Activated T-helper 2 cell treated with anti-CD3 and anti-CD28 coated beads, Interferon-gamma antibody, Interleukin-2, Interleukin-4, amounts not matched to agents 10 μg/mL and 5 μg/mL and 100 μg/mL, durations not matched to agents 14 hours and 24 hours and 36 hours (primary cell): ENCODE measurements at regions of chr12 and their contacts with region 1.

Region 1: DNA sequence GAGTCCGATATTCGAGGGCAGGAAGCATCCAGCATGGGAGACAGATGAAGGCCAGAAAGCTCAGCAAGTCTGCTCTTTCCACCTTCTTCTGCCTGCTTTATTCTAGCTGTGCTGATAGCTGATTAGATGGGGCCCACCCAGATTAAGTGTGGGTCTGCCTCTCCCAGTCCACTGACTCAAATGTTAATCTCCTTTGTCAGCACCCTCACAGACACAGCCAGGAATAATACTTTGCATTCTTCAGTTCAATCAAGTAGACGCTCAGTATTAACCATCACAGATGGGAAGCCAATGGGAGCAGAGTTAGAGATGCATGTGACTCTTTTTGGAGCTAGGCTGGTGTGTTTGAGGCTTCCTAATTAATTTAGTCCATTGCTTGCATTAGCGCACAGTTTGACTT is 17.0 kb downstream of the C12orf75 start:
- DNase-seq: no peak
- H3K4me3 Mint-ChIP-seq: no peak overlapping the region
- H3K27ac Mint-ChIP-seq: peak overlapping the region; percentile 26
- H3K4me1 Mint-ChIP-seq: peaks cover 55% of the 10 kb centered on the region
- H3K27me3 Mint-ChIP-seq: no peaks in the 10 kb centered on the region

Region 2: GRCh38 chr12:104779134-104779533 is 568.4 kb before region 1 on chr12:
- intact Hi-C with region 1: no loop called
- DNase-seq: no peak
- H3K4me3 Mint-ChIP-seq: no peak overlapping the region
- H3K27ac Mint-ChIP-seq: no peak overlapping the region
- H3K4me1 Mint-ChIP-seq: peaks cover 3% of the 10 kb centered on the region
- H3K27me3 Mint-ChIP-seq: peaks cover 19% of the 10 kb centered on the region

Region 3: DNA sequence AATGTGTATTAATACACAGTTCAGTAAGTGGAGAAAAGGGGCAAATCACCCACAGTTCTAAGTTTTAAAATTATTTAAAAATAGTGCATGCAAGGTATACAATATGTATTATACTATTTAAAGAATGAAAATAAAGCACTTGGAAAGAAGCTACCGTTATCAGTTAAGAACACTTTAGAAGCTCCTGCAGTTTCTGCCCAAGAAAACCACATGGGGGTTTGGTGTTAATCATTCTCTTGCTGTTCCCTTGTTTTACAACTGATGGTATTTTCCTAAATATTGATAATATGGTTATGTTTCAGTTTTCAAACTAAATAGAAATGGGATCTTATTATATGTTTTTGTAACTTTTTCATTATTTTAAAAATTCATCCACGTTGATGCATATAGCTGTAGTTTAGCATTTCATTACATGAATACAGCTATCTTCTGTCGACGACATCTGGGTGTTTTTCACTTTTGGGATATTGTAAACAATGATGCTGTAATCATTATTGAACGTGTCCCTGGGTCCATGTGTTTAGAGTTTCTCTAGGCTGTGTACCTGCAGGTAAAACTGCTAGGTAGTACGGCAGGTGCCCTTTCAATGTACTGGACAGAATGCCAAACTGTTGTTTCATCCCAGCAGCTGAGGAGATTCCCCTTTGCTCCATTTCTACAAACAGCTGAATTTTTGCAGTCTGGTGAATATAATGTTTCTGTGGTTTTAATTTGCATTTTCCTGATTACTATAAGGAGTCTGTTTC is 175.6 kb before region 1 on chr12:
- intact Hi-C with region 1: no loop called
- DNase-seq: no peak
- H3K4me3 Mint-ChIP-seq: no peak overlapping the region
- H3K27ac Mint-ChIP-seq: no peak overlapping the region
- H3K4me1 Mint-ChIP-seq: peaks cover 25% of the 10 kb centered on the region
- H3K27me3 Mint-ChIP-seq: no peaks in the 10 kb centered on the region

Region 4: GRCh38 chr12:105337391-105337790 is 10.1 kb before region 1 on chr12:
- intact Hi-C with region 1: loop called (anchors 1 kb)
- DNase-seq: no peak
- H3K4me3 Mint-ChIP-seq: peak overlapping the region; percentile 26
- H3K27ac Mint-ChIP-seq: peak overlapping the region; percentile 98
- H3K4me1 Mint-ChIP-seq: peaks cover 67% of the 10 kb centered on the region
- H3K27me3 Mint-ChIP-seq: no peaks in the 10 kb centered on the region

Region 5: DNA sequence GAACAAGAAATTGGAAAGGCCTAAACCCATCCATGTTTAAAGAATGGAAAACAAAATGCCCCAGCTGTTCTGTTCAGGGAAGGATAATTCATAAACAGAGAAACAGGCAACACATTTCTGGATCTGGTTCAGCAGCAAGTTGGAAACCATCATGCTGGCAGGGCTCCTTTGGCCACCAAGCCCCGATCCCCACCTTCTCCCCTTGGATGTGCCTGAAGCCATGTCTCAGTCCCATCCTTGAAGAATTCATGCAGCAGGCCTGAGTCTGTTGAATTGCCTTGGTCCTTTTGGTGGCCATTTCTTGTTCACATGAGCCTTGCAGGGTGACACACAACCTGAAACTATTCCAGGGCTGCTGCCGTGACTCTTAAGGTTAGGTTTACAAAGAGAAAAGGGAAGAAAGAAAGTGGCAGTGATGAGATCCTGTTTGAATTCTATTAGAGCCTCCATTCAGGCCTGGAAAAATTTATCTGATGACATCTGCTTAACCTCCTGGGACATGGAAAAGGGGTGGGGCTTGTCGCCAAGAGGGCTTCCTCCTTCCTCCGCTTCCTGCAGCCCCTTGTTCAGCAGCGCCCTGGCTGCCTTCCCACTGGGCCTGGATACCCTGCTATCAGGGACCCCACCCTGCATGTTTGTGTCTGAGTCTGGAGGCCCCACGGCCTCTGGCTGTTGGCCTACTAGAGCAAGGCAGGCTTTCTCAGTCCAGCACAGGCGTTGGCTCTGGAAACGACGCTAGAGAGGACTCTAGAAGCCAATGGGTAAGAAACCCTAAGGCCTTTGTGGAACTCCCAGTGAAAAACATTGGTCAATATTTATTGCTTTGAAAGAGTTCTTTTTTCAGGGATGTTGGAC is 324.8 kb after region 1 on chr12:
- intact Hi-C with region 1: no loop called
- DNase-seq: no peak
- H3K4me3 Mint-ChIP-seq: no peak overlapping the region
- H3K27ac Mint-ChIP-seq: no peak overlapping the region
- H3K4me1 Mint-ChIP-seq: no peaks in the 10 kb centered on the region
- H3K27me3 Mint-ChIP-seq: no peaks in the 10 kb centered on the region

Region 6: GRCh38 chr12:106126441-106127337 is 779.2 kb after region 1 on chr12:
- intact Hi-C with region 1: no loop called
- DNase-seq: no peak
- H3K4me3 Mint-ChIP-seq: no peak overlapping the region
- H3K27ac Mint-ChIP-seq: no peak overlapping the region
- H3K4me1 Mint-ChIP-seq: no peaks in the 10 kb centered on the region
- H3K27me3 Mint-ChIP-seq: peaks cover 13% of the 10 kb centered on the region